Activated CD4-positive, alpha-beta T cell treated with anti-CD3 and anti-CD28 coated beads for 36 hours (primary cell): ENCODE measurements at regions of chr19 and their contacts with region 1.

Region 1: DNA sequence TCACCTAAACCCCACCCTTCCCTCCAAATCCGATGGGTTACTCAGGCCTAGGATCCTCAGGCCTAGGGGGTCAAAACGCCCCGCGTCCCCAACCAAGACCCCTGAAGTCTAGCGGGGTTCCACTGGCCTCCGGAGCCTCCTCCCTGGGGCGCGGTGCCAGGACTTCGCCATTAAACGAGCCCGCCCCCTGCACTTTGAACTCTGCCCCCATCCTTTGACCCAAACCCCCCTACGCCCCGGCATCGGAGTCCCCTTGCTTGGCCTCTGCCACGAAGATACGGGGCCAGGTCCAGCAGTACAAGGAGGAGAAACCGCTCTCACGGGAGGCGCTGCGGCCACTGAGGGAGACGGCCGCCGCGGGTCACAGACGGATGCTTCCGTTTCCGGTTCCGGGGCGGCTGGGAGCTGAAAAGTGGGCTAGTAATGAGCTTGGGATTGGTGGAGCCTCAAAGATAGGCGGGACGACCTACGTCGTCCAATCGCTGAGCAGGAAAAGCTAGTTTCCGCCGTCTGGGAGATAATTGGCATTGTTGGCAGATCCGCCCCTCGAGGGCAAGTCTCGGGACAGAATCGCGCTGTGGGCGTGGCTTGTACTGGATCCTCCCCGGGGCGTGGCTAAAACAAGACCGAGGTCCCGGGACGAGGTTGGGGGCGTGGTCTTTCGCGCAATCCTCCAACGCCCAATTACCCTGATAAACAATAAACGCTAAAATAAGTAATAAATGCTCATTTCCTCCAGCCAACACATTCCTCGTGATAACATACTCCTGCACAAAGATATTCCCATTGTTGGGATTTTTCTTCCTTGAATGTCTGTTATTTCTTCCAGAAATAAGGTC is 5.7 kb upstream of the ZNF77 start:
- DNase-seq: peak; percentile 100
- ATAC-seq: peak; percentile 99
- H3K4me3 Mint-ChIP-seq: peak overlapping the region; percentile 95
- H3K27ac Mint-ChIP-seq: peak overlapping the region; percentile 95
- H3K4me1 Mint-ChIP-seq: peaks cover 14% of the 10 kb centered on the region
- H3K27me3 Mint-ChIP-seq: no peaks in the 10 kb centered on the region

Region 2: DNA sequence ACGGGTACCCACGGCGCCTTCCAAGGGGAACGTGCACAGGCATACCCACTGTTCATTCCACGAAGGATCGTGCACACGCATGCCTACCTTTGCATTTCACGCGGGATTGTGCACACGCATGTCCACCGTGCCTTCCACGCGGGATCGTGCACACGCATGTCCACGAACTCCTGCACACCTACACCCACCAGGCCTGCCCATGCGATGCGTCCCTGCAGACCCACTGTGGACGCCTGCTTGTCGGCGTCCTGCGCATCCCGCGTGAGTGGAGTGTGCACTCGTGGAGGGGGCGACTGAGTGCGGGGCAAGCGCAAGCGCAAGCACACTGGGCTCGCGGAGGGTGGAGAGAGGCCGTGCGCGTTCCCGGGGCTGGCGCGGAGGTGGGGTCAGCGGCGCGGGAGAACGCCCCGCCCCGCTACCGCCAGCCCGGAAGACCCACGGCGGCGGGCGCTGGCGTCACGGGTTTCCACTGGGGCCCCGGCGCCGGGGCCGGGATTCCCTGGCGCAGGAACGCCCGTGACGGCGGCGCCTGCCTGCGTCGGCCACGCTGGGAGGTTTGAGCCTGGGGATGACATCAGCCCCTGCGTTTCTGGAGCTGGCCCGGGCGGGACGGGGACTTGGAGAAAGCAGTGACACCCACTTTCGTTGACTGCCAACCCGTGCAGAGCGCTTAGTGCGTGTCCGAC is 455.9 kb before region 1 on chr19:
- CTCF ChIA-PET with region 1: no interaction called
- POLR2A ChIA-PET with region 1: no interaction called
- intact Hi-C with region 1: no loop called
- DNase-seq: peak; percentile 69
- ATAC-seq: peak; percentile 82
- H3K4me3 Mint-ChIP-seq: peak overlapping the region; percentile 52
- H3K27ac Mint-ChIP-seq: no peak overlapping the region
- H3K4me1 Mint-ChIP-seq: peaks cover 13% of the 10 kb centered on the region
- H3K27me3 Mint-ChIP-seq: peaks cover 33% of the 10 kb centered on the region

Region 3: GRCh38 chr19:2648528-2648937 is 302.0 kb before region 1 on chr19:
- CTCF ChIA-PET with region 1: interaction called, 13 read pairs
- POLR2A ChIA-PET with region 1: no interaction called
- intact Hi-C with region 1: no loop called
- DNase-seq: peak; percentile 85
- ATAC-seq: peak; percentile 89
- H3K4me3 Mint-ChIP-seq: no peak overlapping the region
- H3K27ac Mint-ChIP-seq: no peak overlapping the region
- H3K4me1 Mint-ChIP-seq: no peaks in the 10 kb centered on the region
- H3K27me3 Mint-ChIP-seq: no peaks in the 10 kb centered on the region

Region 4: DNA sequence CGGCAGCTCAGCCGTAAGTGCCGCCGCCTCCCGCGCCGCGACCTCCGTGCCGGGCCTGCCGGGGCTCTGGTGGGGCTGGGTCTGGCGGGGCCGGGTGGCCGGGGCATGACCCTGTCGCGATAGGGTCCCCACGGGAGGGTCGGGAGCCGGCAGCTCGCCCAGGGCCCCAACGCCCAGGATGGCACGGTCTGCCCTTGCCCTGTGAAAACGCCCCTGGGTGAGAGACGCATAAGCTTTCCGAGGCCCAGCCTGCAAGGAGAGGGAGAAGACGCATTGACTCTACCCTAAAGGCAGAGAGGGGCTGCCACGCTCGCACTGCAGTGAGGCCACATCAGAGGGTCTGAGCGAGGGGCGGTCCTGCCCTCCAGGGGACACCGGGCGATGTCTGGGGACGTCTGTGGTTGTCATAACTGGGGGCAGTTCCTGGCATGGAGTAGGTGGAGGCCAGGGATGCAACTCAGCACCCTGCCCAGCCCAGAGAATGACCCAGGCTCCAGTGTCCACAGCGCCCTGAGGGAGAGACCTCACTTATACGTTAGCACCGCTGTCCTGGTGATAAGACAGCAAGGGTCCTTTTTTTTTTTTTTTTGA is 130.3 kb before region 1 on chr19:
- CTCF ChIA-PET with region 1: interaction called, 3 read pairs
- POLR2A ChIA-PET with region 1: no interaction called
- intact Hi-C with region 1: loop called in 1 of 2 experiments (anchors 1 kb)
- DNase-seq: peak; percentile 31
- ATAC-seq: no peak
- H3K4me3 Mint-ChIP-seq: peak overlapping the region; percentile 78
- H3K27ac Mint-ChIP-seq: peak overlapping the region; percentile 31
- H3K4me1 Mint-ChIP-seq: peaks cover 12% of the 10 kb centered on the region
- H3K27me3 Mint-ChIP-seq: no peaks in the 10 kb centered on the region

Region 5: GRCh38 chr19:2912306-2912705 is 38.2 kb before region 1 on chr19:
- CTCF ChIA-PET with region 1: interaction called, 17 read pairs
- POLR2A ChIA-PET with region 1: interaction called, 3 read pairs
- intact Hi-C with region 1: no loop called
- DNase-seq: peak; percentile 51
- ATAC-seq: peak; percentile 88
- H3K4me3 Mint-ChIP-seq: peak overlapping the region; percentile 19
- H3K27ac Mint-ChIP-seq: peak overlapping the region; percentile 80
- H3K4me1 Mint-ChIP-seq: peaks cover 32% of the 10 kb centered on the region
- H3K27me3 Mint-ChIP-seq: no peaks in the 10 kb centered on the region

Region 6: GRCh38 chr19:3035542-3036118 is 85.1 kb after region 1 on chr19:
- CTCF ChIA-PET with region 1: interaction called, 23 read pairs
- POLR2A ChIA-PET with region 1: interaction called, 9 read pairs
- intact Hi-C with region 1: loop called in 1 of 2 experiments (anchors 1 kb)
- DNase-seq: peak; percentile 97
- ATAC-seq: peak; percentile 94
- H3K4me3 Mint-ChIP-seq: peak overlapping the region; percentile 83
- H3K27ac Mint-ChIP-seq: peak overlapping the region; percentile 96
- H3K4me1 Mint-ChIP-seq: peaks cover 19% of the 10 kb centered on the region
- H3K27me3 Mint-ChIP-seq: no peaks in the 10 kb centered on the region

Region 7: DNA sequence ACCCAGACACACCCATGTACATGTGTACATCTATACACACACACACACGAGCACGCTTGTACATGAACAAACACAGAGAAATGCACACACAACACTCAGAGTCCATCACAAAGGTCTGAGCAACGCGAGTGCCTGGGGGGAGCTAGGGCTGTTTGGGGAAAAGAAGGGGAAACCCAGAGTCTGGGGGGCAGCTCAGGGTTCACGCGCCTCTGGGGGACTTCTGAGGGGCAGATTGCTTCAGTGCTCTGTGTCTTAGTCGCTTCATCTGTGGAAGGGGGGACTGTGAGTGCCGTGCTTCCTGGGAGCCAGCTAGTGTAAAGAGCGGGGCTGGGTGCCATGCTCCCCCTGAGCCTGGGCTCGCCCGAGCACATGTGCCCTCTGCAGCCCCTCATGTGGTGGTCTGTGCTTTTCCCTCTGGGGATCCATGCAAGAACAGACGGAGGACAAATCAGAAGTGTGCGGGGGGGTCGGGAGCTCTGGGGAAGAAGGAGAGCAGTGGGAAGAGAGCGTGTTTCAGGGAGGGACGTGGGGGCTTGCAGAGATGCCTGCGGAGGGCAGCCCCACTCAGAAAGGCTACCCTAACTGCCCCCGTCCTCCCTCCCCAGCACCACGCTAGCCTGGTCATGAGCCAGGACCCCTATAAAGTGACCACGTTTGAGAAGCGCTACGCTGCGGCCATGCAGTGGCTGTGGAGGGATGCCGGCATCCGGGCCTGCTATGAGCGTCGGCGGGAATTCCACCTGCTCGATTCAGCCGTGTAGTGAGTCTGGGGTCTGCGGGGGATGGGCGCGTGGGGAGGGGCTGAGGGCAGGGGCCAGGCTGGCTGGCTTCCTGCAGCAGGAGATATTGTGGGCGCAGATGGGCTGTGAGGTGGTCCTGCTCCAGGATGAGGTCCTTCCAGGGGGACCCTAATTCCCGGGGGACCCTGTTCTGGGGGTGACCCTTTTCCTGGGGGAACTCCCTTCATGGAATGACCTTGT is 199.3 kb after region 1 on chr19:
- CTCF ChIA-PET with region 1: no interaction called
- POLR2A ChIA-PET with region 1: no interaction called
- intact Hi-C with region 1: no loop called
- DNase-seq: no peak
- ATAC-seq: no peak
- H3K4me3 Mint-ChIP-seq: no peak overlapping the region
- H3K27ac Mint-ChIP-seq: no peak overlapping the region
- H3K4me1 Mint-ChIP-seq: peaks cover 5% of the 10 kb centered on the region
- H3K27me3 Mint-ChIP-seq: no peaks in the 10 kb centered on the region

Region 8: DNA sequence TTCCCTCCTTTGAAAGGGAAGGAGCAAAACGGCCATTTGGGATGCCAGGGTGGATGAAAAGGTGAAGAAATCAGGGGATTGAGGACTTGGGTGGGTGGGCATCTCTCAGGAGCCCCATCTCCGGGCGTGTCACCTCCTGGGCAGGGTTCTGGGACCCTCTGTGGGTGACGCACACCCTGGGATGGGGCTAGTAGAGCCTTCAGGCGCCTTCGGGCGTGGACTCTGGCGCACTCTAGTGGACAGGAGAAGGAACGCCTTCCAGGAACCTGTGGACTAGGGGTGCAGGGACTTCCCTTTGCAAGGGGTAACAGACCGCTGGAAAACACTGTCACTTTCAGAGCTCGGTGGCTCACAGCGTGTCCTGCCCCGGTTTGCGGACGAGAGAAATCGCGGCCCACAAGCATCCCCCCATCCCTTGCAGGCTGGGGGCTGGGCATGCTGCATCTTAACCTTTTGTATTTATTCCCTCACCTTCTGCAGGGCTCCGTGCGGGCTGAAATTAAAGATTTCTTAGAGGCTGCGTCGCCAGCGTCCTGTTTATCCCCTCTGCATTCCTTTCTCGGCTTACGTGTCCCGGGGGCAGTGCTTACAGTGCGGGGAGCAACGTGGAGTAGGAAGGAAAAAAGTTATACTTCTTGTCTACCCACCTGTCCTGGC is 212.9 kb after region 1 on chr19:
- CTCF ChIA-PET with region 1: interaction called, 11 read pairs
- POLR2A ChIA-PET with region 1: no interaction called
- intact Hi-C with region 1: no loop called
- DNase-seq: peak; percentile 82
- ATAC-seq: peak; percentile 82
- H3K4me3 Mint-ChIP-seq: no peak overlapping the region
- H3K27ac Mint-ChIP-seq: peak overlapping the region; percentile 42
- H3K4me1 Mint-ChIP-seq: peaks cover 23% of the 10 kb centered on the region
- H3K27me3 Mint-ChIP-seq: no peaks in the 10 kb centered on the region

Region 9: DNA sequence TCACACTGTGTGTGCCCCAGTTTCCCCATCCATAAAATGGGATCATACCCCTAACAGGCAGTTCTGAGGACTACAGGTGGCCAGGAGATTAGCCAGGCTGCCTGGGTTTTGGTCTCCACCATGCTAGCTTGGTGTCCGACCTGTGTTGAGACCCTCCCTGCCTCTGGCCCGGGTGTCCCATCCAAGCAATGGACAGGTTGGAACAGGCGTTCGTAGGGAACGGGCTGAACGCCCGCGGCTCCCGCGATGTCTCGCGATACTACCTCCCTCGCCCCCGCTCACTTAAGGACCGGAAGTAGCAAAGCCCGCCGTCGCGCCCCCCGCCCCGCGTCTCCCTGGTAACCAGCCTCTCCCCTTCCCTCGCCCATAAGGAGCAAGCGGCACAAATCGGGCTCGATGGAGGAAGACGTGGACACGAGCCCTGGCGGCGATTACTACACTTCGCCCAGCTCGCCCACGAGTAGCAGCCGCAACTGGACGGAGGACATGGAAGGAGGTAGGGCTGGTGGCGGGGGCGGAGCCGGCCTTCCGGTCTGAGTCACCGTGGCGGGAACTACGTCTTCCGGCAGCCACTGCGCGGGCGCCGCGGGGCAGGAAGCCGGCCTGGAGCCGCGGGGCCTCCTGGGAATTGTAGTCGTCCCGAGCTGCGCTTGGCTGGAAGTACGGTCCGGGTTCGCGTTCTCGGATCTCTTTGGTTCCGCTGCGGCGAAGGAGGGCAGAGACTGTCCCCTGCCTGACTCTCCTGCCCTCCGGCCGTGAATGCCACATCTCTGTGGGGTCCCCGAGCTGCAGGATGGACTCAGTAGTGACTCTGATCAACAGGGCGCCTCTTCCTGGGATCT is 484.4 kb after region 1 on chr19:
- CTCF ChIA-PET with region 1: no interaction called
- POLR2A ChIA-PET with region 1: no interaction called
- intact Hi-C with region 1: loop called in 1 of 2 experiments (anchors 1 kb)
- DNase-seq: peak; percentile 98
- ATAC-seq: peak; percentile 96
- H3K4me3 Mint-ChIP-seq: peak overlapping the region; percentile 84
- H3K27ac Mint-ChIP-seq: peak overlapping the region; percentile 99
- H3K4me1 Mint-ChIP-seq: peaks cover 13% of the 10 kb centered on the region
- H3K27me3 Mint-ChIP-seq: no peaks in the 10 kb centered on the region